ENCODE measurements at regions of chr7 and their contacts with region 1.

Region 1: GRCh38 chr7:2719007-2719406 is 31.0 kb downstream of the AMZ1 start:
- DNase-seq: no peak
- H3K4me3 ChIP-seq: no peak overlapping the region
- H3K27ac ChIP-seq: no peak overlapping the region
- H3K4me1 ChIP-seq: peaks cover 8% of the 10 kb centered on the region
- H3K27me3 ChIP-seq: no peaks in the 10 kb centered on the region
- CTCF ChIP-seq: peak in 1 of 4 experiments; percentile 23
- POLR2A ChIP-seq: no peak

Region 2: DNA sequence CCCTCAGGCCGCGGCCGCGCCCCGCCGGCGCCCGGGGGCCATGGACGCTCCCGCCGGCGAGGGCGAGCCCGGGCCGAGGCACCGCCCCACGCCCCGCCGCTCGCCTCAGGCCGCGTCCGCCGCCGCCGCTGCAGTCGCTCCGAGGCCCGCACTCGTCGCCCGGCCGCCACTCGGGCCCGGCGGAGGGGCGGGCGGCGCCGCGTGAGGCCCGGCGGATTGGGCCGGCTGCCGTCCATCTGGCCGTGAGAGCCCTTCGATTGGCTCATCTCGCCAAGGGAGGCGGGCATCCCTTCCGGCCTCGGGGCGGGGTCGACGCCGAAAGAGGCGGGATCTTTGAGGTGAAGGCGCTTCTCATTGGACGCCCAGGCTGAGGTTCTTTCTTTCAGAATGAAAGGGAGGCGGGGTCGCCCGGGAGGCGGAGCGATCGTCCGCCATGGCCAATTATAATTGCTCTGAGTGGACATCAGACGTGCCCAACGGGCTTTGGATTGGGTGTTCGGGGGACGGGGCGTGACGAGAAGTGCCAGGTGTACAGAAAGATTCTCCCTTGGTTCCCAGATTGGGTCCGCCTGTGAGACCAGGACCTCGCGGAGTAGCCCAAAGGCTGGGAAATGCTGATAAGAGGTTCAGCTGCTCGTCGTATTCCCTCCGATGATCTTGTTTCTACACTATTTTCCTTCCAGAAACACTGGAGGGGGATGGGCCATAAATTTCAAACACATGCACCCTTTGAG is 125.3 kb after region 1 on chr7 and contains the start of gene GNA12:
- intact Hi-C with region 1: loop called (anchors 5 kb)
- DNase-seq: peak; percentile 98
- H3K4me3 ChIP-seq: peak within 1 kb of the TSS; percentile 60 to 62
- H3K27ac ChIP-seq: peak within 1 kb of the TSS; percentile 36 to 45
- H3K4me1 ChIP-seq: peaks cover 6% of the 10 kb centered on the region
- H3K27me3 ChIP-seq: no peaks in the 10 kb centered on the region
- CTCF ChIP-seq: no peak
- POLR2A ChIP-seq: peak; percentile 33
- total RNA-seq, gene GNA12: 22.6 to 102 TPM

Measured in prostate gland (tissue), 2 donors.